ENCODE measurements at regions of chr3 and their contacts with region 1.

Region 1: DNA sequence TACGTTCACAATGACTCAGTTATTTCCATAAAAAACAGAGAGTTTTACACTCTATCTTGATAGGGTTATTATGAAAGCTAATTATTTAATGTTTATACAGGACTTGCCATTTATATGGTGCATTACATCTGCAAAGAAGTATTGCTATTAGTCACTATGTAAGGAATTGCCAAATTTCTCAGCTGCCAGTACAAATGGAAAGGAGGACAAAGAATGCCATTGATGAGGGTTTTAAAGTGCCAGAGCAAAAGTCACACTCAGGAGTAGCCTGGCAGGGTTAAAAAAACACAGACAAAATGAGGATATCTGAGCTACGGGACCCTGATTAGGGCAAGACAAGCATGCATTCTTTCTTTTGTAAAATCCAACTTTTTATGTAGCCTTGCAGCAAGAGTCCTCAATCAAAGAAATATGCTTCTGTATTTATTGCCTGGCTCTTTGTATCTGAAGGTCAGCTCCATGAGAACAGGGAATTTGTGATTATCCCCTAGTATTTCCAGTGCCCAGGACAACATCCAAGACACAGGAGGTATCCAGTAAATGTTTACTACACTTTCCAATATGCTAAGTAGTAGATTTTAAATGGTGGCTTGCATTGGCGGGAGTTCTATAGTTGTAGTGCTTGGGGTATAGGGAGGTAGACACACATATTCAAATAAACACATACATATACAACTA is 1013.6 kb downstream of the ROBO1 start:
- DNase-seq: peak; percentile 20
- H3K4me3 Mint-ChIP-seq: no peak overlapping the region
- H3K27ac Mint-ChIP-seq: peak overlapping the region; percentile 31
- H3K4me1 Mint-ChIP-seq: peaks cover 31% of the 10 kb centered on the region
- H3K27me3 Mint-ChIP-seq: no peaks in the 10 kb centered on the region
- CTCF ChIP-seq: no peak

Region 2: DNA sequence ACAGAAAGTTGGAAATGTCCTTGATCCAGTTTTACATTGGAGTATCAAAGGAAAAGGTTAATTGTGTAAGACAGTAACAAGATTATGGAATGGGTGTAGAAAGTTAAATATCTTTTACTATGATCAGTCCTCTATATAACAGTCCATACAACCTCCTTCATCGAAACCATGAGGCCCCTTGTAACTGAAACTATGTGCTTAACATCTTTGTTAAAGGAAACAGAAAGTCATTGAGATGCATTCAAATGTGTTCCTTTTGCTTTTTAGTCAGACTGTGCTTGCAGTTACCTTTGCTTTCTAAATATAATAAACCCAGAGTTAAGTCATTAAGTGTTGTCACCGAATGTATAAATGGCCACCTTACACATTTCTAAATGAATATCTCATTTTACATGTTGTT is 415.8 kb before region 1 on chr3:
- CTCF ChIA-PET with region 1: no interaction called
- intact Hi-C with region 1: no loop called
- DNase-seq: no peak
- H3K4me3 Mint-ChIP-seq: no peak overlapping the region
- H3K27ac Mint-ChIP-seq: no peak overlapping the region
- H3K4me1 Mint-ChIP-seq: no peaks in the 10 kb centered on the region
- H3K27me3 Mint-ChIP-seq: no peaks in the 10 kb centered on the region
- CTCF ChIP-seq: no peak

Region 3: DNA sequence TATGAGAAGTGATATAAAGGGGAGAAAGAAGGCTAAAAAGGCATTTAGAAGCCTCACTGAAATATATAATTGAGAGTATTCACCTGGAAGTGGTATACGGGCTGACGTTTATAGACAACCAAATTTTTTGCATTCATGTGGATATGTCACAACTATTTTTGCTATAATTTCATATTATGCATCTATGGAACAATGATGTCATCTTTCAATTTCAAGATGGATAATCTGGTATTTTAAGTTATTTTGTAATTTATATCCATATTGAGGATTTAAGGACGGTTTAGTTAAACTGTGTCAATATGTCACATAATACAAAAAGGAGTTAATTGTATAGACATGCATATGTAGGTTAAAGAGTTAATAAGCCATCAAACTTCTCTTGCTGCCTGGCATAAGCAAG is 377.2 kb before region 1 on chr3:
- CTCF ChIA-PET with region 1: no interaction called
- intact Hi-C with region 1: no loop called
- DNase-seq: no peak
- H3K4me3 Mint-ChIP-seq: no peak overlapping the region
- H3K27ac Mint-ChIP-seq: no peak overlapping the region
- H3K4me1 Mint-ChIP-seq: no peaks in the 10 kb centered on the region
- H3K27me3 Mint-ChIP-seq: no peaks in the 10 kb centered on the region
- CTCF ChIP-seq: no peak

Region 4: GRCh38 chr3:78825118-78825857 is 71.1 kb after region 1 on chr3:
- CTCF ChIA-PET with region 1: no interaction called
- intact Hi-C with region 1: loop called (anchors 5 kb)
- DNase-seq: no peak
- H3K4me3 Mint-ChIP-seq: no peak overlapping the region
- H3K27ac Mint-ChIP-seq: no peak overlapping the region
- H3K4me1 Mint-ChIP-seq: peaks cover 29% of the 10 kb centered on the region
- H3K27me3 Mint-ChIP-seq: no peaks in the 10 kb centered on the region
- CTCF ChIP-seq: no peak